B cell (primary cell): ENCODE measurements at regions of chr2 and their contacts with region 1.

Region 1: GRCh38 chr2:202660796-202661195 is 26.0 kb downstream of the FAM117B start:
- DNase-seq: no peak
- ATAC-seq: no peak
- H3K4me3 ChIP-seq: no peak overlapping the region
- H3K4me3 Mint-ChIP-seq: no peak overlapping the region
- H3K27ac ChIP-seq: no peak overlapping the region
- H3K27ac Mint-ChIP-seq: peak overlapping the region; percentile 37
- H3K4me1 ChIP-seq: peaks cover 41 to 59% of the 10 kb centered on the region in 2 donors
- H3K4me1 Mint-ChIP-seq: peaks cover 71% of the 10 kb centered on the region
- H3K27me3 ChIP-seq: no peaks in the 10 kb centered on the region
- H3K27me3 Mint-ChIP-seq: no peaks in the 10 kb centered on the region
- CTCF ChIP-seq: no peak

Region 2: DNA sequence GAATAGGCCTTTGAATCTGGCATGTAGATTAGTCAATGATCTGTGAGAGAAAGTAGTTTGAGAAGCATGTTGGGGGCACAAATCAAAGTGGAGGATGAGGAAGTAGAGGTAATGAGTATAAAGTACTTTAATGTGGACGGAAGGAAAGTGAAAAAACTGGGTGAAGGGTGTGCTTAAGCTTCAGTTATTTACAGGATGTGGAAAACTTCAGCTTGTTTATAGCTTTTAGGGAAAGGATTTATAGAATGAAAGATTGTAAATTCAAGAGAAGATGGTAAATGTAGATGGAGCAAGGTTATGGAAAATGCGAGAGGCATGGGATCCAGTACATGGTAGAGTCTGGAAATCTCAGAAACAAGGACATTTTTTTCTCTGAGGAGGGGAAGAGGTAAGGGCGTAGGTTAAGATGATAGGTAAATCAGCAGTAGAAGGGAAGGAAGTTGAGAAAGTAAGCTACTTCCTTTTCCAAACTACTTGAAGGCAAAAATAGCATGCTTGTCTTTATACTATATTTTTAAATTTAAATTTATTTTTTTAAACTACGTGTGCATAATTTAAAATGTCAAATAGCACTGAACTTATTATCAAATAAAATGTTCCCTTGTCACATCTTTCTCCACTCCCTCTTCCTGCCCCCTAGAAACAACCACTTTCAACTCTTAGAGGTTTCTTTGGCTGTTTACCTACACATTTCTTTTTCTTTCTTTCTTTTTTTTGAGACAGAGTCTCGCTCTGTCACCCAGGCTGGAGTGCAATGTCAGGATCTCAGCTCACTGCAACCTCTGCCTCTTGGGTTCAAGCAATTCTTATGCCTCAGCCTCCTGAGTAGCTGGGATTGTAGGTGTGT is 17.6 kb before region 1 on chr2:
- CTCF ChIA-PET with region 1: interaction called, 13 read pairs
- POLR2A ChIA-PET with region 1: interaction called, 3 read pairs
- intact Hi-C with region 1: loop called (anchors 1 kb)
- DNase-seq: peak; percentile 67
- ATAC-seq: peak; percentile 61
- H3K4me3 ChIP-seq: peak overlapping the region; percentile 6 to 45 (median 39)
- H3K4me3 Mint-ChIP-seq: peak overlapping the region; percentile 73
- H3K27ac ChIP-seq: peak overlapping the region; percentile 88 to 89
- H3K27ac Mint-ChIP-seq: no peak overlapping the region
- H3K4me1 ChIP-seq: peaks cover 80 to 85% of the 10 kb centered on the region in 2 donors
- H3K4me1 Mint-ChIP-seq: peaks cover 62% of the 10 kb centered on the region
- H3K27me3 ChIP-seq: no peaks in the 10 kb centered on the region
- H3K27me3 Mint-ChIP-seq: no peaks in the 10 kb centered on the region
- CTCF ChIP-seq: no peak

Region 3: DNA sequence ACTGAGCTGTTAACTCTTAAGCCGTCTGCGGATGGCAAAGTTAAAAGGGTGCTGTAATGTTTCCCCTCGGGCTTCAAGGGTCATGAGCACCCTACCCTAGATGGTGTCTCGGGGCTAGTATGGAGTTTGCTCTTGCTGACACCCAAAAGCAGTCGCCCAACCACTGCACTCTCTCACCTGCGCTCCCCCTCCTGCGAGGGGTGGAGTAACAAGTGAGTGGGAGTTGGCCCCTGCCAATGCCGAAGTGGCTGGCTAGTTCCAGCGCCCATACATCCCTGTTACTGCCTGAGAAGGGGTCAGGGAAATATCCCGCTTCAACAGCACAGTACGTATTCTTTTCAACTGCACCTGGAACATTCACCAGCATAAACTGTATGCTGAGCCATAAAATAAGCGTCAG is 21.5 kb after region 1 on chr2:
- CTCF ChIA-PET with region 1: no interaction called
- POLR2A ChIA-PET with region 1: no interaction called
- intact Hi-C with region 1: no loop called
- DNase-seq: no peak
- ATAC-seq: no peak
- H3K4me3 ChIP-seq: no peak overlapping the region
- H3K4me3 Mint-ChIP-seq: no peak overlapping the region
- H3K27ac ChIP-seq: no peak overlapping the region
- H3K27ac Mint-ChIP-seq: no peak overlapping the region
- H3K4me1 ChIP-seq: peaks cover 4 to 9% of the 10 kb centered on the region in 2 donors
- H3K4me1 Mint-ChIP-seq: peaks cover 33% of the 10 kb centered on the region
- H3K27me3 ChIP-seq: no peaks in the 10 kb centered on the region
- H3K27me3 Mint-ChIP-seq: no peaks in the 10 kb centered on the region
- CTCF ChIP-seq: no peak

Region 4: GRCh38 chr2:202750763-202751427 is 90.1 kb after region 1 on chr2:
- CTCF ChIA-PET with region 1: no interaction called
- POLR2A ChIA-PET with region 1: no interaction called
- intact Hi-C with region 1: loop called (anchors 5 kb)
- DNase-seq: peak; percentile 58
- ATAC-seq: peak; percentile 80
- H3K4me3 ChIP-seq: peak overlapping the region in 1 of 5 experiments; percentile 6
- H3K4me3 Mint-ChIP-seq: peak overlapping the region; percentile 67
- H3K27ac ChIP-seq: peak overlapping the region; percentile 74 to 87
- H3K27ac Mint-ChIP-seq: peak overlapping the region; percentile 85
- H3K4me1 ChIP-seq: peaks cover 14 to 19% of the 10 kb centered on the region in 2 donors
- H3K4me1 Mint-ChIP-seq: peaks cover 43% of the 10 kb centered on the region
- H3K27me3 ChIP-seq: no peaks in the 10 kb centered on the region
- H3K27me3 Mint-ChIP-seq: no peaks in the 10 kb centered on the region
- CTCF ChIP-seq: no peak